Activated naive CD4-positive, alpha-beta T cell treated with anti-CD3 and anti-CD28 coated beads for 36 hours (primary cell): ENCODE measurements at regions of chr3 and their contacts with region 1.

Region 1: GRCh38 chr3:43621656-43622432 is at the start of gene ANO10:
- DNase-seq: peak; percentile 97
- H3K4me3 Mint-ChIP-seq: peak within 1 kb of the TSS; percentile 85
- H3K27ac Mint-ChIP-seq: peak within 1 kb of the TSS; percentile 83
- H3K4me1 Mint-ChIP-seq: peaks cover 8% of the 10 kb centered on the region
- H3K27me3 Mint-ChIP-seq: no peaks in the 10 kb centered on the region
- total RNA-seq, gene ANO10: 9.3 to 9.7 TPM

Region 2: DNA sequence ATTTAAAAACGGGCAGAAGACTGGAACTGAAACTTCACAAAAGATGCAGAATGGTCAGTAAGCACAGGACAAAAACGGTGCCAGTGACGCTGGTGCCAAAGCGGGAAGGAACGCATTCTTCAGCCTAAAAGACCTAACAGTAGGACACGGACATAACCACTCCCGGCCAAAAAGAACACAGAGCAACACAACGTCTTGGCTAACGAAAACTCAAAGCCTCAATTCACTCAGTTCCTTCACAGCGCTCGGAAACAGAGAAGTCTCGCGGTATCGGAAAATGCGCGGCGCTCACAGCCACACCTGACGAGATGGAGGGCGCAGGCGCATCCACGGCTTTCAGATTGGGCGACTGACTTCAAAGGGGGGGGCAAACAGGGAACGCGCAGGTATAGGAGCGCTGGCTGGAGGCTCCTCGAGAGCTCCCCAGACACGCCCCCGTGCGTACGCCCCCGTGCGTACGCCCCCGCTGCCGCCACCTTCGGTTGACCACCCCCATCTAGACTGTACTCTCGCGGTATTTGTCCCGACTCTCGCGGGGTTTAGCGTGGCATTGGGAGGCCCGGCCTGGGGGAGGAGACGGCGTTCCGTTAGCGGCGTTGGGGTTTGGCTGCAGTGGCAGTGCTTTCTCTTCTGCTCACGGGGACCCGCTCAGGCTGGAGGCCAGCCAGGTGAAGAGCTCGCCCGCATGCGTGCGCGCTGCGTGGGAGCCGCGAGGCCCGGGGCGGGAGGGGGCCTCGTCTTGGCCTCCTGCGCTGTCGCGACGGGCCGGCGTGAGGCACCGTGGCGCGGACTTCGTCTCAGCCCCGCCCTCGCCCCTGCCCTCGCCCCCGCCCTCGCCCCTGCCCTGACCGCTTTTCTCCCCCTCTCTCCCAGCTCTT is 1021.5 kb before region 1 on chr3 and contains the start of gene NKTR:
- CTCF ChIA-PET with region 1: no interaction called
- intact Hi-C with region 1: loop called (anchors 10 kb)
- DNase-seq: peak; percentile 99
- H3K4me3 Mint-ChIP-seq: peak within 1 kb of the TSS; percentile 96
- H3K27ac Mint-ChIP-seq: peak within 1 kb of the TSS; percentile 99
- H3K4me1 Mint-ChIP-seq: peaks cover 27% of the 10 kb centered on the region
- H3K27me3 Mint-ChIP-seq: no peaks in the 10 kb centered on the region
- total RNA-seq, gene NKTR: 62.1 to 65.9 TPM

Region 3: GRCh38 chr3:43286115-43286840 is 335.6 kb before region 1 on chr3 and contains the start of gene SNRK:
- CTCF ChIA-PET with region 1: no interaction called
- intact Hi-C with region 1: loop called (anchors 2 kb)
- DNase-seq: peak; percentile 91
- H3K4me3 Mint-ChIP-seq: peak within 1 kb of the TSS; percentile 91
- H3K27ac Mint-ChIP-seq: peak within 1 kb of the TSS; percentile 93
- H3K4me1 Mint-ChIP-seq: peaks cover 33% of the 10 kb centered on the region
- H3K27me3 Mint-ChIP-seq: no peaks in the 10 kb centered on the region
- total RNA-seq, gene SNRK: 21.1 TPM

Region 4: DNA sequence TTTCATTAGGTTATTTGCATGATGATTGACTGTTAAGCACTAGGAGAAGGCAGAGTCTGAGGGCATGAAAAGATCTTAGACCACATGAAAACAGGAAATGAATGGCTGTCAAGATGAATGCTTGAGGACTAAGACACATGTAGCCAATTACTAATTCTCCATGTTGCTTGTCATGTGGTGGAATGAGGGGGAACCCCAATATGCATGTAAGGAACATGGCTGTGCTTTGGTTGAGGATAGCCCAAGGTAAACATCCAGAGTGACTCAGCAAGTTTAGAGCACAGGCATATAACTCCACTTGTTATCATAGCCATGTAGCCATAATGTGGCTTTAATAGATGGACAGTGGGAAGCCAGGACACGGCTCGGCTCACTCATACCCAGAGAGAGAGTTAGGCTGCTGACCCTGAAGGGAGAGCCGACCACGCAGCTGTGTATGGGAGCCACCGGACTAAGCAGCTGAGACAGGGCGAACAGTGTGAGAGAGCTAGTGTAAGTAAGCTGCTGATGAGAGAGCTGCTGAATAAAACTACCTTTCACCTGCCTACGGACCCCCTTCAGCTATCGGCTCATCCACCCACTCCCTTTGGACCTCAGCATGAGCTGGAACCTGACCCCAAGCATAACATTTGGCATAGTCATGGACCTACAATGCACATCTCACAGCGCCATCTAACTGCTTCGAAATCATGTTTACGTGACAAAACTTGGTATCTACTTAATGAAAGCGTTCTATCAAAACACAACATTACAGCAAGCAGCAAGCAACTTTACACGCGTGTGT is 37.6 kb before region 1 on chr3:
- CTCF ChIA-PET with region 1: no interaction called
- intact Hi-C with region 1: loop called (anchors 2 kb)
- DNase-seq: peak; percentile 40
- H3K4me3 Mint-ChIP-seq: no peak overlapping the region
- H3K27ac Mint-ChIP-seq: no peak overlapping the region
- H3K4me1 Mint-ChIP-seq: peaks cover 14% of the 10 kb centered on the region
- H3K27me3 Mint-ChIP-seq: no peaks in the 10 kb centered on the region

Region 5: DNA sequence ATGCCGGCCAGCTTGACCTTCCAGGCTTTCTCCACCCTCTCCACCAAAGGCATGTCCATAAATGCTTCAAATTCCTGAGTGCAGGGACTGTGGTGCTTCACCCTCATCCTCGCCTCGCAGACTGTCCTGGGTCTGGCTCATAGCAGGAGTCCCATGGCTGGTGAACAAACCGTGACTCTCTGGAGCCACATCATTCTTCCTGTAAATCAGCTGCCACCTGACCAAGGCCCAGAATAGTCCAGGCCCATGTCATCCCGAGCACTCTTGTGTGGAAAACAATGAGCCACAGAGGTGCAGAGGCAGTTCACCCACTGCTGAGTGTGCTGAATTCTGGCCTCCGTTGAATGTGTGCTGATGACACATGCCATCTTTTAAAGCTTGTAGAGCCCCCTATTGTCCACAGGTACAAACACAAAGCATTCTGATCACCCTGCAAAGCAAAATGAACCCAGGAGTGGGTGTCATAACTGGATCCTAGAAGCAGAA is 137.5 kb after region 1 on chr3:
- CTCF ChIA-PET with region 1: no interaction called
- intact Hi-C with region 1: loop called (anchors 10 kb)
- DNase-seq: peak; percentile 17
- H3K4me3 Mint-ChIP-seq: no peak overlapping the region
- H3K27ac Mint-ChIP-seq: no peak overlapping the region
- H3K4me1 Mint-ChIP-seq: peaks cover 46% of the 10 kb centered on the region
- H3K27me3 Mint-ChIP-seq: no peaks in the 10 kb centered on the region